H1 (cell line): ENCODE measurements at regions of chr3 and their contacts with region 1.

Region 1: DNA sequence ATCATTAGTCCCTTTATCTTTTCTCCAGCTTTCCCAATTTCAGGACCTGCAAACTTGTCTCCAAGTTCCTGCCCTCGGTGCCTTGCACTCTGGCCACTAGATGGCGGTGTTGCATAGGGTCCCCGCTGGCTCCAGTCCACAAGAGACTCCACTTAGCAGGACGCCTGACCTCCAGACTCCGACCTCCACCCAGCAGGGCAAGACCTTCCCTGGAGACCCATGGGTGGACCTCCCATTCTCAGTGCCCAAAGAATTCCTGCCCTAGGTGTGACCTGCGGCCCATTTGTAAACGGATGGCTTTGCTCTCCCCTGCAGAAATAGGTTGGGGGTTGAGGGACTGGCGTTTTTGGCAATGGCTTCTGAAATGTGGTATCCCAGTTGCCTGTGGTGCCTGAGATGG is 82.6 kb downstream of the LSM3 start:
- DNase-seq: peak in 1 of 2 experiments; percentile 97
- H3K4me3 ChIP-seq: no peak overlapping the region
- H3K27ac ChIP-seq: no peak overlapping the region
- H3K4me1 ChIP-seq: peaks cover 0 to 7% (median 0%) of the 10 kb centered on the region in 4 experiments; a peak in 1 of 7 replicates
- H3K27me3 ChIP-seq: 0 out of 7 replicates have a peak, but pooled peaks cover 0 to 3% (median 0%) of the 10 kb centered on the region in 4 experiments
- CTCF ChIP-seq: peak; percentile 95
- EP300 ChIP-seq: no peak
- POLR2A ChIP-seq: no peak
- RAD21 ChIP-seq: peak; percentile 99

Region 2: GRCh38 chr3:14001136-14001535 is 260.1 kb before region 1 on chr3:
- CTCF ChIA-PET with region 1: no interaction called
- POLR2A ChIA-PET with region 1: no interaction called
- DNase-seq: no peak
- H3K4me3 ChIP-seq: no peak overlapping the region
- H3K27ac ChIP-seq: no peak overlapping the region
- H3K4me1 ChIP-seq: no peaks in the 10 kb centered on the region
- H3K27me3 ChIP-seq: no peaks in the 10 kb centered on the region
- CTCF ChIP-seq: no peak
- EP300 ChIP-seq: no peak
- POLR2A ChIP-seq: no peak
- RAD21 ChIP-seq: no peak

Region 3: DNA sequence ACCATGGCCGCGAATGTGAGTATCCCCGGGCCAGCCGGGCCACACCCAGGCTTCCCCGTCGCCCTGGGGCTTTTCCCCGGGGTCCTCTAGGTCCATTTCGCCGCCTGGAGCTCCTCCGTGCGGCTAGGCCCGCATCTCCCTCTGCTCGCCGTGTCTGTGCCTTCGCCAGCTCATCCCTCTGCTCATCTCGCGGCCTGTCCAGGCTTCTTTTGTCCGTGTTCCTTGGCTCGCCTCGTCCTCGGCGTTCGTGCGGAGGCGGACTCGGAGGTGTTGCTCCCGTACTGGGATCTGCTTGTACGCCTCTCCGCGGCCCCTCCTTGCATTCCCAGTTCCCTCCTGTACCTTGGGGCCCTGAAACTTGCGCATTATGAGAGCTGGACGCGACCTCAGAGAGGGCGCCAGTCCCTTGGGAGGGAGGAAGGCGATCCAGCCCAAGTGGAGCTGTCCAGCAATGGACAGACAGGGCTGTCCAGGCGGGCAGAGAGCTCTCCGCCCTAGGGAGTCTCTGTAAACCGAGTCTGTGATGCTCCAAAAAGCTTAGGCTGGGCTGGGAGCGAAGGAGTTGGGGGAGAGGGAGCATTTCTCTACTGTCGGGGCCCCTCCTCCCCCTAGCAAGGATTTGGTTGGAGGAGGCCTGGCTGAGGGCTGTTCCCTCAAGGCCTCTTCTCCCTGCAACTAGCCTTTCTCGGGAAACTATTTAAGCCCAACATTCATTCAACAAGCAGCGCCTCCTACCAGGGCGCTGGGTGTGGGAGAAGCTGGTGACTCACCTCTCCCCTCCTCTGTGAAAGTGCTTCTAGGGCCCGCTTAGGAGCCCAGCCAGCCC is 135.8 kb before region 1 on chr3:
- CTCF ChIA-PET with region 1: no interaction called
- POLR2A ChIA-PET with region 1: no interaction called
- DNase-seq: peak in 1 of 2 experiments; percentile 67
- H3K4me3 ChIP-seq: peak overlapping the region; percentile 90 to 97 (median 91)
- H3K27ac ChIP-seq: peak overlapping the region; percentile 41
- H3K4me1 ChIP-seq: peaks cover 0 to 14% (median 10%) of the 10 kb centered on the region in 4 experiments; a peak in 6 of 7 replicates
- H3K27me3 ChIP-seq: no peaks in the 10 kb centered on the region
- CTCF ChIP-seq: 0 out of 4 replicates have a peak, but pooled peaks of 1 of the 3 experiments have one; percentile 6
- EP300 ChIP-seq: peak in 1 of 2 experiments; percentile 72; a peak in 1 of 3 replicates
- POLR2A ChIP-seq: no peak
- RAD21 ChIP-seq: peak in 1 of 2 experiments; percentile 19; a peak in 2 of 4 replicates

Region 4: GRCh38 chr3:14363991-14364390 is 102.8 kb after region 1 on chr3:
- CTCF ChIA-PET with region 1: interaction called, 18 read pairs
- POLR2A ChIA-PET with region 1: no interaction called
- DNase-seq: no peak
- H3K4me3 ChIP-seq: no peak overlapping the region
- H3K27ac ChIP-seq: no peak overlapping the region
- H3K4me1 ChIP-seq: peaks cover 0 to 10% (median 3%) of the 10 kb centered on the region in 4 experiments; a peak in 2 of 7 replicates
- H3K27me3 ChIP-seq: no peaks in the 10 kb centered on the region
- CTCF ChIP-seq: no peak
- EP300 ChIP-seq: no peak
- POLR2A ChIP-seq: no peak
- RAD21 ChIP-seq: no peak

Region 5: GRCh38 chr3:14391033-14391432 is 129.8 kb after region 1 on chr3:
- CTCF ChIA-PET with region 1: interaction called, 21 read pairs
- POLR2A ChIA-PET with region 1: interaction called, 3 read pairs
- DNase-seq: no peak
- H3K4me3 ChIP-seq: no peak overlapping the region
- H3K27ac ChIP-seq: no peak overlapping the region
- H3K4me1 ChIP-seq: peaks cover 0 to 5% (median 3%) of the 10 kb centered on the region in 4 experiments; a peak in 6 of 7 replicates
- H3K27me3 ChIP-seq: no peaks in the 10 kb centered on the region
- CTCF ChIP-seq: no peak
- EP300 ChIP-seq: no peak
- POLR2A ChIP-seq: no peak
- RAD21 ChIP-seq: no peak

Region 6: GRCh38 chr3:14431892-14432834 is 170.9 kb after region 1 on chr3:
- CTCF ChIA-PET with region 1: interaction called, 14 read pairs
- POLR2A ChIA-PET with region 1: no interaction called
- DNase-seq: no peak
- H3K4me3 ChIP-seq: no peak overlapping the region
- H3K27ac ChIP-seq: no peak overlapping the region; the same call in 1 of the 2 replicates
- H3K4me1 ChIP-seq: peaks cover 0 to 18% (median 5%) of the 10 kb centered on the region in 4 experiments; a peak in 5 of 7 replicates
- H3K27me3 ChIP-seq: no peaks in the 10 kb centered on the region
- CTCF ChIP-seq: no peak
- EP300 ChIP-seq: no peak
- POLR2A ChIP-seq: no peak
- RAD21 ChIP-seq: no peak